ENCODE measurements at regions of chr19 and their contacts with region 1.

Region 1: GRCh38 chr19:55258828-55259539 is at the start of gene PPP6R1:
- DNase-seq: peak; percentile 86 to 98 (median 92)
- ATAC-seq: peak; percentile 81
- H3K4me3 ChIP-seq: peak within 1 kb of the TSS; percentile 80 to 93
- H3K4me3 Mint-ChIP-seq: peak within 1 kb of the TSS; percentile 94
- H3K27ac ChIP-seq: peak within 1 kb of the TSS; percentile 87 to 95
- H3K27ac Mint-ChIP-seq: peak within 1 kb of the TSS; percentile 98
- H3K4me1 ChIP-seq: peaks cover 37% of the 10 kb centered on the region
- H3K4me1 Mint-ChIP-seq: peaks cover 39% of the 10 kb centered on the region
- H3K27me3 ChIP-seq: no peaks in the 10 kb centered on the region
- H3K27me3 Mint-ChIP-seq: no peaks in the 10 kb centered on the region
- CTCF ChIP-seq: no peak
- total RNA-seq, gene PPP6R1: 163 to 172 TPM

Region 2: DNA sequence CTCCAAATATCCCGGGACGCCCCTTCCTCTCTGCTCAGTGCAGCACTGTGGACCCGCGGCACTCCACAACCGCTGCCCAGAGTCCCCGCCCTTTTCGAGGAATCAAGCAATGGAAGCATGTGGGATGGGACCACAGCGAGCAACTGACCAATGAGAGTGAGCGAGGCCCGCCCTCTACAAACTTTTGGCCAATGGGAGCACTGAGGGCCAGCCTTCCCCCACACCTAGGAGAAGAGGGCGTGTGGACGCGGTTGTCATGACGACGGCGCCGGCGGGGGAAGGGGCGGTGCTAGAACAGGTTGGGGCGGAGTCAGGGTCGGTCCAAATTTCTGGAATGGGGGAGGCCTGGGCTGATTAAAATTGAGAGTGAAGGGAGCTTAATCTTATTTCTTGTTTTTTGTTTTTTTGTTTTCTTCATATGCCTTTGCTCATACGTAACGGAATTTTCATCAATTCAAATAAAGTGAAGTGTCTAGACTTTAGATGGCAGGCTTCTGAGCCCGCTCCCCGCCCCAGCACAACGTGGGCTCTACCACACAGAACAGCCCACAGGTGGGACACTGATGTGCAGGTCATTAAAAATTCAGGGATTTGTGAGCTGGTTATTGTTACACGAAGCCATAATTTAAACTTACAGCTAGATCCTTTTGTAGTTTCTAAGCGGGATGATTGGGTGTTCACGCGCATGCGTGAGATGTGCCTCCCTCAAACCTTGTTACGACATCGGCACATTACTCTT is 92.3 kb before region 1 on chr19 and contains the start of gene DNAAF3:
- CTCF ChIA-PET with region 1: no interaction called
- POLR2A ChIA-PET with region 1: no interaction called
- intact Hi-C with region 1: no loop called
- DNase-seq: peak; percentile 18 to 81 (median 57)
- ATAC-seq: peak; percentile 70
- H3K4me3 ChIP-seq: peak within 1 kb of the TSS; percentile 11 to 39
- H3K4me3 Mint-ChIP-seq: peak within 1 kb of the TSS; percentile 42
- H3K27ac ChIP-seq: no peak within 1 kb of the TSS
- H3K27ac Mint-ChIP-seq: peak within 1 kb of the TSS; percentile 27
- H3K4me1 ChIP-seq: peaks cover 15% of the 10 kb centered on the region
- H3K4me1 Mint-ChIP-seq: peaks cover 12% of the 10 kb centered on the region
- H3K27me3 ChIP-seq: peaks cover 23 to 45% of the 10 kb centered on the region in 2 experiments
- H3K27me3 Mint-ChIP-seq: peaks cover 69% of the 10 kb centered on the region
- CTCF ChIP-seq: no peak
- total RNA-seq, gene DNAAF3: not detected

Region 3: GRCh38 chr19:55178781-55179599 is 80.0 kb before region 1 on chr19:
- CTCF ChIA-PET with region 1: no interaction called
- POLR2A ChIA-PET with region 1: no interaction called
- intact Hi-C with region 1: loop called (anchors 1 kb)
- DNase-seq: peak; percentile 87 to 99 (median 96)
- ATAC-seq: peak; percentile 79
- H3K4me3 ChIP-seq: peak overlapping the region; percentile 39 to 44
- H3K4me3 Mint-ChIP-seq: peak overlapping the region; percentile 75
- H3K27ac ChIP-seq: peak overlapping the region; percentile 45 to 61
- H3K27ac Mint-ChIP-seq: peak overlapping the region; percentile 79
- H3K4me1 ChIP-seq: peaks cover 27% of the 10 kb centered on the region
- H3K4me1 Mint-ChIP-seq: peaks cover 23% of the 10 kb centered on the region
- H3K27me3 ChIP-seq: peaks cover 43 to 67% of the 10 kb centered on the region in 2 experiments
- H3K27me3 Mint-ChIP-seq: peaks cover 68% of the 10 kb centered on the region
- CTCF ChIP-seq: no peak

Region 4: GRCh38 chr19:55279770-55280643 is 21.0 kb after region 1 on chr19 and contains the start of gene HSPBP1:
- CTCF ChIA-PET with region 1: interaction called, 22 read pairs
- POLR2A ChIA-PET with region 1: interaction called, 56 read pairs
- intact Hi-C with region 1: loop called (anchors 1 kb)
- DNase-seq: peak; percentile 87 to 98 (median 95)
- ATAC-seq: peak; percentile 86
- H3K4me3 ChIP-seq: peak within 1 kb of the TSS; percentile 73 to 85
- H3K4me3 Mint-ChIP-seq: peak within 1 kb of the TSS; percentile 96
- H3K27ac ChIP-seq: peak within 1 kb of the TSS; percentile 89 to 90
- H3K27ac Mint-ChIP-seq: peak within 1 kb of the TSS; percentile 98
- H3K4me1 ChIP-seq: peaks cover 32% of the 10 kb centered on the region
- H3K4me1 Mint-ChIP-seq: peaks cover 44% of the 10 kb centered on the region
- H3K27me3 ChIP-seq: no peaks in the 10 kb centered on the region
- H3K27me3 Mint-ChIP-seq: no peaks in the 10 kb centered on the region
- CTCF ChIP-seq: no peak
- total RNA-seq, gene HSPBP1: 18.8 to 18.9 TPM

Region 5: DNA sequence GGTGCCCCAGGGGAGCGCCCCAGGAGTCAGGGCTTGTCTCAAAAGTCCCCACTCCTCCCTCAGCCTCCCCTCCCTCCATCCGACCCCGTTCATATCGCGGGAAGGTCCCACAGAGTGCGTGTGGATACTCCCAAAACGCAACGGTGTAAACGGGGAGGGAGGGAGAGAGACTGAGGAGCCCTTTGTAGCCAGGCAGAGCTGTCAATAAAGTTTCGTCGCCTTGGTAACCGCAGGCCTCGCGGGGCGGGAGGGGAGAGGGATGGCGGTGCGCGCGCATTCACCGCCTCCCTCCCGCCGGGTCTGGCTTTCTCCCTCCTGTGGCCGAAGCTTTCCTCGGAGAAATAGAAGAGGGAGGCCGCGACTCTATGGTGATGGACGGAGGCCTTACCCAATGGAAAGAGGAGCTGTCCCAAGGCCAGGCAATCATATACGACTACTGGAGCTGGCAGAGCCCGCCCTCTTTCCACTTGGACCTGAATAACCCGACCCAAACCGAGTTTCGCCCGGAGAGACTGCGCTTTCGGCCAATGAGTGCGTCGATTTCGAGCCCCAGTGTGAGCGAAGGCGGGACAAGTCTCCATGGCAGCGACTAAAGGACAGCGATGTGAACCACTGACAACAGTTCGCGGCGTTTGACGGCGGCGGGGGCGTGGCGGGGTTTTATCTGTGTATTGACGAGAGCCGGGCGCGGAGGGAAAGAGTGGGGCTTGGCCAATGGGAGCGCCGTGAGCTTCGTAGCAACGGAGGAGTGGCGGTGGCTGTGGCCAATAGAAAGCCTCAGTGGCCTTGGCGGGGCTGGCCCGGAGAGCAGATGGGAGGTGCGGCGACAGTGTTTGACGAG is 80.3 kb after region 1 on chr19 and contains the start of gene KMT5C:
- CTCF ChIA-PET with region 1: interaction called, 3 read pairs
- POLR2A ChIA-PET with region 1: interaction called, 12 read pairs
- intact Hi-C with region 1: loop called (anchors 1 kb)
- DNase-seq: peak; percentile 100
- ATAC-seq: peak; percentile 75
- H3K4me3 ChIP-seq: peak within 1 kb of the TSS; percentile 67 to 80
- H3K4me3 Mint-ChIP-seq: peak within 1 kb of the TSS; percentile 94
- H3K27ac ChIP-seq: peak within 1 kb of the TSS; percentile 94 to 100
- H3K27ac Mint-ChIP-seq: peak within 1 kb of the TSS; percentile 95
- H3K4me1 ChIP-seq: peaks cover 24% of the 10 kb centered on the region
- H3K4me1 Mint-ChIP-seq: peaks cover 20% of the 10 kb centered on the region
- H3K27me3 ChIP-seq: peaks cover 0 to 6% of the 10 kb centered on the region in 2 experiments
- H3K27me3 Mint-ChIP-seq: peaks cover 6% of the 10 kb centered on the region
- CTCF ChIP-seq: no peak
- total RNA-seq, gene KMT5C: 82.0 to 84.4 TPM

Region 6: DNA sequence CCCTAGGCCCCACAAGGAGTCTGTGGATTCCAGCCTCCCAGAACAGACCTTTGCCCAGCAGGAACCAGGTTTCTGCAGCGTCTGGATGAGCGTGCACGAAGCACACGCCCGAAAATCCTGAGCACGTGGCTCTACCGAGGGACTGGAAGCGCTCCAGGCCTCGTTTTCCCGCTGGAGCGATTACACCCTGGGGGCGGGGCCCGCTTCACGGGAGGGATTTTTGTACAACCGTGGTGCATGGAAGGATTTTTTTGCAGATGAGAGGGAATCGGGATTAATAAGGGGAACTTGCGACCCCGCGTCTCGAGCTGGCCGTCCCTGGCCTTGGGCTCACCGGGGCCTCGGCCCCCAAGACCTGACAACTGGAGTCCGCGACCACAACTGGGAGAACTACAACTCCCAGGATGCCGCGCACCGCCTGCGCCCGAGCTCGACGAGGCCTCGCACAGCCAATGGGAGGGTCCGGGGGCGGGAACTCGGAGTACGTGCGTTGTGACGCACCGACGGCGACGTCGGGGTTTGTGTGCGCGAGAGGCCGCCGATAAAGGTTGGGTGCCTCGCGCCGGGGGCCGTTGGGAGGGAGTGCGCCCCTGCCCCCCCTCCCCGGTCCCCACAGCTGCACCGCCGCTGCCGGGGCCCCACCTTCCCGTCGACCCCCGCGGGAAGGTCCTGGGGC is 217.3 kb after region 1 on chr19 and contains the start of gene ZNF628:
- CTCF ChIA-PET with region 1: no interaction called
- POLR2A ChIA-PET with region 1: interaction called, 10 read pairs
- intact Hi-C with region 1: loop called (anchors 1 kb)
- DNase-seq: peak; percentile 95 to 99 (median 98)
- ATAC-seq: peak; percentile 93
- H3K4me3 ChIP-seq: peak within 1 kb of the TSS; percentile 70 to 72
- H3K4me3 Mint-ChIP-seq: peak within 1 kb of the TSS; percentile 85
- H3K27ac ChIP-seq: peak within 1 kb of the TSS; percentile 58 to 91
- H3K27ac Mint-ChIP-seq: peak within 1 kb of the TSS; percentile 88
- H3K4me1 ChIP-seq: peaks cover 17% of the 10 kb centered on the region
- H3K4me1 Mint-ChIP-seq: peaks cover 34% of the 10 kb centered on the region
- H3K27me3 ChIP-seq: no peaks in the 10 kb centered on the region
- H3K27me3 Mint-ChIP-seq: no peaks in the 10 kb centered on the region
- CTCF ChIP-seq: no peak
- total RNA-seq, gene ZNF628: 27.0 to 27.8 TPM

Region 7: GRCh38 chr19:55605207-55605636 is 346.2 kb after region 1 on chr19:
- CTCF ChIA-PET with region 1: no interaction called
- POLR2A ChIA-PET with region 1: no interaction called
- intact Hi-C with region 1: loop called (anchors 1 to 2 kb)
- DNase-seq: peak; percentile 90 to 99 (median 98)
- ATAC-seq: peak; percentile 78
- H3K4me3 ChIP-seq: peak overlapping the region; percentile 60 to 80
- H3K4me3 Mint-ChIP-seq: peak overlapping the region; percentile 86
- H3K27ac ChIP-seq: peak overlapping the region; percentile 60 to 91
- H3K27ac Mint-ChIP-seq: peak overlapping the region; percentile 90
- H3K4me1 ChIP-seq: peaks cover 24% of the 10 kb centered on the region
- H3K4me1 Mint-ChIP-seq: peaks cover 60% of the 10 kb centered on the region
- H3K27me3 ChIP-seq: no peaks in the 10 kb centered on the region
- H3K27me3 Mint-ChIP-seq: no peaks in the 10 kb centered on the region
- CTCF ChIP-seq: no peak

Measured in CD8-positive, alpha-beta T cell (primary cell).